ENCODE measurements at regions of chr9 and their contacts with region 1.

Region 1: GRCh38 chr9:124779362-124780059 is 2.6 kb downstream of the OLFML2A start:
- DNase-seq: no peak
- ATAC-seq: no peak
- H3K4me3 ChIP-seq: no peak overlapping the region
- H3K27ac ChIP-seq: no peak overlapping the region
- H3K4me1 ChIP-seq: peaks cover 17% of the 10 kb centered on the region
- H3K27me3 ChIP-seq: no peaks in the 10 kb centered on the region
- CTCF ChIP-seq: no peak
- POLR2A ChIP-seq: no peak

Region 2: GRCh38 chr9:125374443-125375309 is 595.2 kb after region 1 on chr9:
- intact Hi-C with region 1: loop called (anchors 10 kb)
- DNase-seq: peak; percentile 64 to 70 (median 66)
- ATAC-seq: peak; percentile 80
- H3K4me3 ChIP-seq: no peak overlapping the region
- H3K27ac ChIP-seq: no peak overlapping the region
- H3K4me1 ChIP-seq: peaks cover 29% of the 10 kb centered on the region
- H3K27me3 ChIP-seq: no peaks in the 10 kb centered on the region
- CTCF ChIP-seq: peak; percentile 62 to 90 (median 85)
- POLR2A ChIP-seq: no peak

Measured in body of pancreas (tissue), 4 donors.